Head of caudate nucleus (tissue), 42 donors: ENCODE measurements at regions of chr4 and their contacts with region 1.

Region 1: GRCh38 chr4:93710101-93710846 is 118.3 kb upstream of the ATOH1 start:
- DNase-seq: peak in 23 of 42 donors; percentile 6 to 75 (median 35)

Region 2: GRCh38 chr4:93228021-93228420 is 482.3 kb before region 1 on chr4:
- intact Hi-C with region 1: no loop called
- DNase-seq: no peak

Region 3: DNA sequence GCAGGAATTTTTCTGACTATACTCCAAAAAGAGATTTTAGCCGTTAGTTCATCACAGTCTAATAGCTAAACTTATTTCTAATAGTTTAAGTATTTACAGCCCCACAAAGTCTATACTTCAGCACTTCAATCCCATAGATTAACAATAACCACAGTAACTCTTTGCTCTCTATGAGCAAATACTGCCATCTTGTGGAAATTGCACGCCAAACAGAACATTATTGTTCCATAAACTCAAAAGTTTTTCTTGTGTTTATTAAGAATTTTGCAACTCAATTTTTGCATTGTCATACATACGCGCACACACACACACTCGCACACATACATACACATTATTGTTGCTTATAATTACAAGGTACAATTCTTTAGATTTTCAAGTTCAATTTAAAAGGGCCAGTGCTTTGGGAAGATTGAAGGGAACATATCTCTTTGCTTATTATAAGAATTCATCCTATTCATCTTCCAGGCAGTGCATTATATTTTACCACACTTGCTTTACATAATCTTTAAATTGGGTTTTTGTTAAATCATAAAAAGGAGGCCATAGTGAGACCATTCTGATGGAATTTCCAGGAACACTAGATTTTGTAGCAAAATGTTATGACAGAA is 54.5 kb after region 1 on chr4:
- intact Hi-C with region 1: loop called (anchors 5 kb)
- DNase-seq: peak in 20 of 42 donors; percentile 1 to 73 (median 44)